ENCODE measurements at regions of chr2 and their contacts with region 1.

Region 1: DNA sequence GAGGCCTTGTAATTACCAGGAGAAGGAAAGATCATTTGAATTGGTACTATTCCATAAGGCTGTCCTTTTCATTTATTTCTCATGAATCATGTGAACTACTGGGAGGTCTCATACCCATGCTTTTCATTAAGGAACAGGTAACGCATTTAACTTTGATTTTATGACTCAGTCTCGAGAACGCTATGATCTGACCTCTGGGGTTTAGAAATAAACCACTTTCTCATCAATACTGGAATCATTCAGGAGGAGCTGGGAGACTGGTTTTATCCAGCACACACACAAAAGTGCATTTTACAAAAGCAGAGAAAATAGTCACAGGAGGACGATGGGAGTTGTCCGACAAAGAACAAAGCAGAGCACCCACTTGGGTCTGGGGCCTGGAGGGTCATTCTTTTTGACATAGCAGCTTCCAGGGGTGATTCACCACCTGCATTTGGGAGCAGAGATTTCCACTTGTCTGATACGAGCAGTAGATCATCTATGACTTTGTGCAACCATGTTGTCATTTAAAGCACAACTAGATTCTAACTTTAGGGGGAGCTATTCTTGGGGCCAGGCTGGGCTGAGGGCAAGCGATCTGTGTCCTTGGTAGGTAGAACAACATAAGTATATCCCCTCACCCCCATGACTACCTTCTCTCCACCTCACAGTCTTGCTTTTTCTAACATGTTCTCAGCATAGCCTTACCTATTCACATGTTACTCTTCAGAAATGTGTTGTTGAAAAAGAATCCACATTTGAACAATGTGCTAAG is 95.9 kb upstream of the SCG2 start:
- DNase-seq: no peak
- H3K4me3 Mint-ChIP-seq: no peak overlapping the region
- H3K27ac Mint-ChIP-seq: no peak overlapping the region
- H3K4me1 Mint-ChIP-seq: peaks cover 13% of the 10 kb centered on the region
- H3K27me3 Mint-ChIP-seq: peaks cover 11% of the 10 kb centered on the region

Region 2: GRCh38 chr2:223760838-223761502 is 62.9 kb after region 1 on chr2:
- CTCF ChIA-PET with region 1: no interaction called
- intact Hi-C with region 1: loop called (anchors 2 kb)
- DNase-seq: peak; percentile 47
- H3K4me3 Mint-ChIP-seq: no peak overlapping the region
- H3K27ac Mint-ChIP-seq: no peak overlapping the region
- H3K4me1 Mint-ChIP-seq: peaks cover 6% of the 10 kb centered on the region
- H3K27me3 Mint-ChIP-seq: no peaks in the 10 kb centered on the region

Measured in activated naive CD4-positive, alpha-beta T cell treated with anti-CD3 and anti-CD28 coated beads for 36 hours (primary cell).